ENCODE measurements at regions of chr20 and their contacts with region 1.

Region 1: GRCh38 chr20:43925801-43926200 is 11.1 kb downstream of the TOX2 start:
- DNase-seq: no peak
- H3K4me3 Mint-ChIP-seq: peak overlapping the region; percentile 32
- H3K27ac Mint-ChIP-seq: no peak overlapping the region
- H3K4me1 Mint-ChIP-seq: peaks cover 62% of the 10 kb centered on the region
- H3K27me3 Mint-ChIP-seq: peaks cover 37% of the 10 kb centered on the region

Region 2: DNA sequence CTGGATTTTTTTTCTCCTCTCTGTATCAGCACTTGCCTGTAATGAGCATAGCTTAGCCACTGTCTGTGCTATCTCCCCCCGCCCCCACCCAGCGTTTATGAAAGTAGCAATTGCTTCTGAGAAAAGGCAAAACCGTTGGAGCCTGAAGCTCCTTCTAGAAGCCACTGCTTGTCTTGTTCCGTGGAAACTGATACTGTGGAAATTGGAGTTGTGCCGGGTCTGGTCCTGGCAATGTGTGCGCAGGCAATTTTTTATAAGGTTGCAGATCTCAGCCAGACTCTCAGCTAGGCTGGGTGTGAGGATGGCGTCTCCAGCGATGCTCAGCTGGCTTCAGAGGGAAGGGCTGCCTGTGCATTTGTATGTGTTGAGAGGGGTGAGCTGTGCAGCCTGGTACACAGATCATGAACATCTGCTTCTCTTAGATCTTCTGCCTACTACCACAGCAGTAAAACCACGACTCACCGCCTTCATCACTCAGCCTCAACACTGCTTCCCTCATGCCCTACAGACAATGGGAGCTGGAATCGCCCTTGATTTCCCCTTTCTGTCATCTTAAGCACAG is 126.6 kb before region 1 on chr20:
- intact Hi-C with region 1: no loop called
- DNase-seq: no peak
- H3K4me3 Mint-ChIP-seq: peak overlapping the region; percentile 28
- H3K27ac Mint-ChIP-seq: peak overlapping the region; percentile 74
- H3K4me1 Mint-ChIP-seq: peaks cover 28% of the 10 kb centered on the region
- H3K27me3 Mint-ChIP-seq: no peaks in the 10 kb centered on the region

Region 3: DNA sequence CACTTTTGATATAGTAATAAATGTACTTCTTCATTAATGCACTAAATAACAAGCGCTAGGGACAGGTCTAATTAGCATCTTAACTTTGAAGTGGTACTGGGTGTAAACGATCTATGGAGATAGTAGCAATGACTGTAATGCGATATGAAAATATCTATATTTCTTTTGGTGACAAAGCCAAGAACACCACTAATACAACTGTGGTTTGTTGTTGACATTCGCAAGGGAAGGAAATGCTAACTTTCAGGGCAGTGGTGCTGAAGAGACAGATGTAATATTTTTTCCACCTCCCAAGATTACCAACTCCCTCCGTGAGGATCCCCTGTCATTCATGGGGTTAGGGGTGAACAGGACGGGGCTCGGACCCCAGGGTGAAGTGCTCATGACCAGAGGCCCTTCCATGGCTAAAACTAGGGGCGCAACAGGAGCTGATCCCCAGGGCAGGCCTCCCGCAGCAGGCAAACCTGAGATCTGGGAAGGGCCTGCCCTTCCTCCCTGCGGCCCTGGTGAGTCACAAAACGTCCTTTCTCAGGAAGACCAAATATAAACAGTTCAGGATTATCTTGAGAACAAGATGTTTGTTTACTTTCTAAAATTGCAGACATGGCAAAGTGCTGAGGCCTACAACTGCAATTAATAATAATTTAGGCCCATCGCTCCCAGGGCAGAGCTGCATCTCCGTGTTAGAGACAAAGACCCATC is 76.2 kb before region 1 on chr20:
- intact Hi-C with region 1: no loop called
- DNase-seq: no peak
- H3K4me3 Mint-ChIP-seq: no peak overlapping the region
- H3K27ac Mint-ChIP-seq: no peak overlapping the region
- H3K4me1 Mint-ChIP-seq: peaks cover 20% of the 10 kb centered on the region
- H3K27me3 Mint-ChIP-seq: peaks cover 4% of the 10 kb centered on the region

Region 4: DNA sequence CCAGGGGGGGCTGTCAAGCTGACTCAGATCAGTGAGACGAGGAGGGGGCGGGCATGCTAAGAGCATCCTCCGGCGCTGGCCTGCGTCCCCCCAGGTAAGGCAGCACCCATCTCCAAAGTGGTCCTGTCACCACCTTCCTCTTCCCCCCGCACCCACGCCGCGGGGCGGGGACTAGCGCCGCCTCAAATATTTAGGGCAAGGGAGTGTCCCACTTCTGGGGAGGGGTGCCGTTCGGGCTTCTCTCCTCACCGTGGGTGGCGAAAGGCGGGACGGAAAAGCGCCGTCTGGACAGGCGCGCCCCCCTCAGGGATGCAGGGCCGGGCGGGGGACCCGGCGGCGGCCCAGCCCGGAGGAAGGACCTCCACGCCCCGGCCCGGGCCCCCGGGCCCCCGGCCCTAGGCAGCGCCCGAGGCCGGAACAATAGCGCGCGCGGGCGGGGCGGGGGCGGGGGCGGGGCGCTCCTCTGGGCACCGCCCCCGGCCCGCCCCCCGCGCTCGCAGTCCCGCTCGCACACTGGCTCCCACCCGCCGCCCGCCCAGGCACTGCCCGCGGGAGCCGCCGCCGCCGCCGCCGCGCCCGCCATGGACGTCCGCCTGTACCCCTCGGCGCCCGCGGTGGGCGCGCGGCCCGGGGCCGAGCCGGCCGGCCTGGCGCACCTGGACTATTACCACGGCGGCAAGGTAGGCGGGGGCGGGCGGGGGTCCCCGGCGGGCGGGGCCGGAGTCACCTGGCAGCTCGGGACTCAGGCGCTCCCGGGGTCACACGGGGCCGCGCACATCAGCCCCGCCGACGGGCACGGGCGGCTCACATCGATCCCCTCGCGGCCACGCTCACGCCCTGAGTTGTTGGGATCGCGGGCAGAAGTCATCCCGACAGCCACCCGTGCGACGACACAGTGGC is 11.2 kb before region 1 on chr20 and contains the start of gene TOX2:
- intact Hi-C with region 1: loop called (anchors 1 kb)
- DNase-seq: peak; percentile 40
- H3K4me3 Mint-ChIP-seq: peak within 1 kb of the TSS; percentile 82
- H3K27ac Mint-ChIP-seq: peak within 1 kb of the TSS; percentile 62
- H3K4me1 Mint-ChIP-seq: peaks cover 32% of the 10 kb centered on the region
- H3K27me3 Mint-ChIP-seq: peaks cover 46% of the 10 kb centered on the region
- total RNA-seq, gene TOX2: 2.4 and 3.0 TPM in 2 replicates

Region 5: GRCh38 chr20:43942661-43943290 is 17.0 kb after region 1 on chr20:
- intact Hi-C with region 1: loop called (anchors 2 kb)
- DNase-seq: peak; percentile 26
- H3K4me3 Mint-ChIP-seq: peak overlapping the region; percentile 43
- H3K27ac Mint-ChIP-seq: peak overlapping the region; percentile 73
- H3K4me1 Mint-ChIP-seq: peaks cover 69% of the 10 kb centered on the region
- H3K27me3 Mint-ChIP-seq: peaks cover 21% of the 10 kb centered on the region

Region 6: DNA sequence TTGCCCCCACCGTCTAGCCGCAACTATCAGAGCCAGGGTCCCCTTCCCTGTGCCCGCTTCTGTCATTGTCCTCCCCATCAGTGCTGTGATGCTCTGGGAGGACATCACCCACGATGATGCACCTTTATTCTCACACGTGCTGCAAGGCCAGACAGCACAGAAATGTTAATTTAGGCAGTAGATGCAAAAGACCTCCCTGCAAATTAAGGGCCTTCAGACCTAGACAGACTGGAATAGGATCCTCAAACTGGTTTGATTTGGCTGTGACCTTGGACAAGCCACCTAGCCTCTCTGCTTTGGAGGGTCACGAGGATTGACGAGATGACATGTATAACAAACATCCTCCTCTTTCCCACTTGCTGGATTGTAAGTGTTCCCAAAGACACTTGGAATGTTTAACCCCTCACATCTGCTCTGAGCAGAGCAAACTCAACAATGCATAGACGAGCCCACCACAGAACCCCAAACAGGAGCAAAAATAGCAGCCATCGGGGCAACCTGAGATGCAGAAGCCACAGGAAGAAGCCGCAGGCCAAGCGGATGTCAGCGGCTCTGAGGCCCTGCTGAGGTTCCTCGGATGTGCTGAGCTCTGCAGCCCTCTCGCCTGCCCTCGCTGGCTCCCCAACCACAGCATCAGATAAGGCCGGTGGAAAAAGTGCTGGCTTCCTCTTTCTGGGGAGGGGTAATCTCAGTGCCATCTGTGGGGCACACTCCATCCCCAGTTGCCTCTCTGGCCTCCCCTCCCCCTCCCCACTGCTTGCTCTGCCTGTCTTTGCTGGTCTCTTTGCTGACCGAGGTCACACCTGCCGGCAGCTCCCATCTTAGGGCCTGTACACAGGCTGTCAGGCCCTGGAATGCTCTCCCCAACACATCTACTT is 24.2 kb after region 1 on chr20:
- intact Hi-C with region 1: loop called (anchors 1 kb)
- DNase-seq: peak; percentile 87
- H3K4me3 Mint-ChIP-seq: peak overlapping the region; percentile 57
- H3K27ac Mint-ChIP-seq: peak overlapping the region; percentile 36
- H3K4me1 Mint-ChIP-seq: peaks cover 74% of the 10 kb centered on the region
- H3K27me3 Mint-ChIP-seq: peaks cover 51% of the 10 kb centered on the region